Ascending aorta (tissue), 2 donors: ENCODE measurements at regions of chr1 and their contacts with region 1.

Region 1: DNA sequence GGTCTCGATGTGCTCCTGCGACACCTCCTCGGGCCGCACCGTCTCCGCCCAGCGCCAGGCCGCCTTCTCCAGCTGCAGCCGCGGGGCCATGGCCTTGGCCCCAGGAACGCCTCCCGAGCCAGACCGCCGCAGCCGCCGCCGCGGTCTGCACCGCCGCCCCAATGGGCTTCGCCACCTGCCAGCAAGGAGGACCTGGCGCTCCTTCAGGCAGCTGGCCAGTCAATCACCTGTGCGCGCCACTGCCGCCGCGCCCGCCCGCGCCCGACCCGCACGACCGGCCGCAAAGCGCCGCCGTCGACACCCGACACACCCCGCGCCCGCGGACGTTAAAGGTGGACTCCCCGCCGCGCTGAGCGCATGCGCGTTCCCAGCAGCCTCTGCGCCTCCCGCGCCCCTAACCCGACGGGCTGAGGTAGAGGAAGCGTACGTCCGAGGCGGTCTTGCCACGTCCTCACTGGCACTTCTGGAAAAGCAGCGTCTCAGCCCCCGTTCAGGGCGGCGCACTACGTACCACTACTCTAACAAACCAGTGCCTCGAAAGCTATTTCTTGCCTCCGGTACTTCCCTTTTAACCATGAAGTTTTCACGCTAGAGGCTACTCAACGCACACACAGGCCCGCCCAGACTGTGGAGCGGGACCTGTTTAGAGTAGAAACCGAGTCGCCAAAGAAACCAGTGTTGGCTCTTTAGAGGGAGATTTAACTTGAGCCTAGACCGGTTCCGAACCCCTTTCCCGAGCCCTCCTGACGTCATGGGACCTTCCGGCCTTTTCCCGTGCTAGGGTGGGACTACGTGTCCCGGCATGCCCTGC is at the start of gene USP48:
- DNase-seq: peak; percentile 92 to 98
- H3K4me3 ChIP-seq: peak within 1 kb of the TSS; percentile 97 to 99
- H3K27ac ChIP-seq: peak within 1 kb of the TSS; percentile 99 to 100
- H3K4me1 ChIP-seq: peaks cover 9 to 13% of the 10 kb centered on the region in 2 donors
- H3K27me3 ChIP-seq: no peaks in the 10 kb centered on the region
- CTCF ChIP-seq: no peak
- total RNA-seq, gene USP48: 41.3 TPM

Region 2: DNA sequence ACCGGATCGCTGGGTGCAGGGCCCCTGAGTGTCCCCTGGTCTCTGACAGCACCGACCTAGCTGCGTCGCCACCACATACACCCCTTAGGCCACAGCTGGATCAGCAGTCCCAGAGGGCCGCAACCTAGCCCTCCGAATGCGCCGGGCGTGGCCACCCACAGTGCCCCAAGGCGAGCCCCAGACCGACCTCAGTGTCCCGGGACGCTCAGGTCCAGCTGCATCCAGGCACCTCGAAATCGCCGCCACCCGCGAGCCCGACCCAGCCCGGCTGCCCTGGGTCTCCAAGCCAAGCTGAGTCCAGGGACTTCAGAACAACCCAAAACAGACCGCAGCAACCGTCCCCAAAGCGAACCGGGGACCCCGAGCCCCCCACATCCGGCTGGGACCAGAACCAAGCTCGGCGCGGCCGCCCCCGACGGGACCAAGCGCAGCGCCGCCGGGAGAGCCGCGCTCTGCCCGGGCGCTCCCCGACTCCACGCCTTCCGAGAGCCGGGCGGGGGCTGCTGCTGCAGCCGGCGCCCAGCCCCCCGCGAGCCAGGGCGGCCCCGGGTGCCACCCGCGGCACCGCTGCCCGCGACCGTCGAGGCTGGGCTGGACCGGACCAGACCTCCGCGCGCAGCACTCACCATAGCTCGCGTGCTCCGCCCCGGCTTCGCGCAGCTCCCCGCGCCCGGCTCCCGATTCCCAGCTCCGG is 438.2 kb before region 1 on chr1:
- intact Hi-C with region 1: loop called (anchors 5 kb)
- DNase-seq: no peak
- H3K4me3 ChIP-seq: peak overlapping the region; percentile 90 to 93
- H3K27ac ChIP-seq: peak overlapping the region; percentile 95 to 97
- H3K4me1 ChIP-seq: peaks cover 17 to 27% of the 10 kb centered on the region in 2 donors
- H3K27me3 ChIP-seq: no peaks in the 10 kb centered on the region
- CTCF ChIP-seq: no peak

Region 3: GRCh38 chr1:21764615-21765423 is 18.3 kb before region 1 on chr1:
- intact Hi-C with region 1: loop called (anchors 1 kb)
- DNase-seq: peak in 1 of 2 donors; percentile 84
- H3K4me3 ChIP-seq: no peak overlapping the region
- H3K27ac ChIP-seq: peak overlapping the region; percentile 62 to 75
- H3K4me1 ChIP-seq: peaks cover 3 to 22% of the 10 kb centered on the region in 2 donors
- H3K27me3 ChIP-seq: no peaks in the 10 kb centered on the region
- CTCF ChIP-seq: no peak

Region 4: DNA sequence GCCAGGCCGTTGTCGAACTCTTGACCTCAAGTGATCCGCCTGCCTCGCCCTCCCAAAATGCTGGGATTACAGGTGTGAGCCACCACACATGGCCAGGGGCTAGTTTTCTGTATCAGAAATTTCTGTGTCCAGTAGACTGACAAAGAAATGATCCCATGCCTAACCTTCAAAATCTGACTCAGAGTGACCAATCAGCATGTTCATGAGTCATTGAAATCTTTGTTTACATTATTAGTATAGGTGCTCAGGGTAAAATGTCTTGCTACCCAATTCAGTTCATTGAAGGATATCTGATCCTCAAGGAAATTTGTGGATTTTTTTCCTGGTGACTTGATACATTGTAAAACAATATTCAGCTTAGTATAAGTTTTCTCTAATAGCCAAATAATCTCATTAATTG is 18.0 kb after region 1 on chr1:
- intact Hi-C with region 1: no loop called
- DNase-seq: no peak
- H3K4me3 ChIP-seq: no peak overlapping the region
- H3K27ac ChIP-seq: no peak overlapping the region
- H3K4me1 ChIP-seq: no peaks in the 10 kb centered on the region
- H3K27me3 ChIP-seq: no peaks in the 10 kb centered on the region
- CTCF ChIP-seq: no peak

Region 5: DNA sequence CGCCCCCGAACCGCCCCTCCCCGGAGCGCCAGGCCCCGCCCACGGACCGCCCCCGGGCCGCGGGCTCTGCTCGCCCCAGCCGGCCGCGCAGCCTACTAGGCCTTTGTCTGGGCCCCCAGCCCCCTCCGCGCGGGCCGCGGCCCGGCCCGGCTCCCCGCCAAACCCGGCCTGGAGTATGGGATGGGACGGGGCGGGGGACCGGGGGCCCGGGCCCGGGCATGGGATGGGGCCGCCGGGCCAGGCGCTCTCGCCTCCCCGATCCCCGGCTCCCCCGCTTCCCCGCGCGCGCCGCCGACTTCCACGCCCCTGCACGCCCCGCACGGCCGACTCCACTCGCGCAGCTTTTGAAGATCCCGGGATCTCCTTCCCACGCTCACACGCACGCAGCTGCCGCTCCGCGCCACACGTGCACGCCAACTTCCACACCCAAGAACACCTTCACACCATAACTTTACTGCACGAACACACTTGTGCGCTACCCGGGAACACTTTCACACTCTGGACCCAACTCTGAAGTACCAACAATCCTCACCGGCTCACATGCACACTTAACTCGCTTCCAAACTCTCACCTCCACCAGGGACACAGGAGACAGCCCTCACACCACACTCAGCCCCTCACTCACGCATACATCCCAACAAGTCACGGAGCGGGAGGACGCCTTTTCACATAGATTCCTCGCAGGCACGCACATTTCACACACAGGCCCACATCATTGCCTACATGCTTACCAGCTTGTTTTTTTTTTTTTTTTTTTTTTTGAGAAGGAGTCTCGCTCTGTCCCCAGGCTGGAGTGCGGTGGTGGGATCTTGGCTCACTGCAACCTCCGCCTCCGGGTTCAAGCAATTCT is 154.5 kb after region 1 on chr1:
- intact Hi-C with region 1: loop called (anchors 2 kb)
- DNase-seq: peak in 1 of 2 donors; percentile 83
- H3K4me3 ChIP-seq: peak overlapping the region; percentile 57 to 70
- H3K27ac ChIP-seq: peak overlapping the region; percentile 94 to 95
- H3K4me1 ChIP-seq: peaks cover 17 to 63% of the 10 kb centered on the region in 2 donors
- H3K27me3 ChIP-seq: no peaks in the 10 kb centered on the region
- CTCF ChIP-seq: no peak

Region 6: GRCh38 chr1:21963477-21964217 is 180.6 kb after region 1 on chr1:
- intact Hi-C with region 1: loop called (anchors 5 kb)
- DNase-seq: peak in 1 of 2 donors; percentile 89
- H3K4me3 ChIP-seq: no peak overlapping the region
- H3K27ac ChIP-seq: no peak overlapping the region
- H3K4me1 ChIP-seq: no peaks in the 10 kb centered on the region
- H3K27me3 ChIP-seq: no peaks in the 10 kb centered on the region
- CTCF ChIP-seq: peak; percentile 89 to 95 (median 92)

Region 7: DNA sequence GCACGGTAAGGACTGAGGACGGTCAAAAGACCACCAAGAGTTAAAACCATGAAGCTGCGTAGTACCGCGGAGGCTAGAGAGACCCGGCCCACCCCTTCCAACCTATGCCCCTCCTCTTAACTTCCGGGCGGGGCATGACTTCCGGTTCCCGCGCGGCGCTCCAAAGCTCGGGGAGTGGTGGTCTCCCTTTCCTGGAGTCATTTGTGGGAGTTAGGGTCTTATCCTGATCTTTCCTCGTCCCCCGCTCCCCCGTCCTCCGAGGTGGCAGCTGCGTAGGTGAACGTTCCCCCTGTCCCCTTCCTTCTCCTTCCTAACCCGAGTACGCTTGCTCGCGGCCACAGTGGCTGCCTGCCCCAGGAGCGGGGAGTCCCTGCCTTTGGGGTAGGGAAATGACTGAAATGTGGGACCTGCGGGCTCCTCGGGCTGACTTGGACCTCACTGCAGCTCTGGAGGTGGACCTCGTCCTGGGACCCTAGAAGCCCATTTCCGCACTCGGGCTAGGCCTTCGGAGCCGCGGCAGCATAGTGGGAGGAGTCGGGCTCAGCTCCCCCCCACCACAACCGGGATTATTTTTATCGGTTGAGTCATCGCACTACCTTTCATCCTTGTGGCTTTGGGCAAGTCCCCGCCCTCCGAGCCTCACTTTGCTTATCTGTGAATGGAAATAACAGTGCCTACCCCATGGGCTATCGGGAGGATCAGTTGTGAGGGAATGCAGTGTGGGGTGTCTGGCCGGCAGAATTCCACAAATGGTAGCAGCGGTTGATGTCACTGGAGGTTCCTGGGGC is 242.5 kb after region 1 on chr1:
- intact Hi-C with region 1: loop called (anchors 2 kb)
- DNase-seq: peak; percentile 68 to 92
- H3K4me3 ChIP-seq: peak overlapping the region; percentile 77 to 90
- H3K27ac ChIP-seq: peak overlapping the region; percentile 97 to 99
- H3K4me1 ChIP-seq: peaks cover 4 to 5% of the 10 kb centered on the region in 2 donors
- H3K27me3 ChIP-seq: no peaks in the 10 kb centered on the region
- CTCF ChIP-seq: no peak

Region 8: GRCh38 chr1:22052115-22053016 is 269.3 kb after region 1 on chr1 and contains the start of gene CDC42:
- intact Hi-C with region 1: loop called (anchors 1 kb)
- DNase-seq: peak; percentile 88 to 98
- H3K4me3 ChIP-seq: peak within 1 kb of the TSS; percentile 93 to 100
- H3K27ac ChIP-seq: peak within 1 kb of the TSS; percentile 99
- H3K4me1 ChIP-seq: peaks cover 15 to 29% of the 10 kb centered on the region in 2 donors
- H3K27me3 ChIP-seq: no peaks in the 10 kb centered on the region
- CTCF ChIP-seq: no peak
- total RNA-seq, gene CDC42: 111 TPM